GM23248 (cell line): ENCODE measurements at regions of chr5 and their contacts with region 1.

Region 1: GRCh38 chr5:44774279-44774880 is 34.4 kb upstream of the MRPS30 start:
- DNase-seq: peak; percentile 76
- H3K4me3 ChIP-seq: no peak overlapping the region
- H3K27ac ChIP-seq: no peak overlapping the region
- H3K4me1 ChIP-seq: peaks cover 6% of the 10 kb centered on the region
- H3K27me3 ChIP-seq: peaks cover 15% of the 10 kb centered on the region

Region 2: GRCh38 chr5:43729846-43730478 is 1044.4 kb before region 1 on chr5:
- in situ Hi-C with region 1: loop called (anchors 25 kb)
- DNase-seq: peak; percentile 48
- H3K4me3 ChIP-seq: no peak overlapping the region
- H3K27ac ChIP-seq: no peak overlapping the region
- H3K4me1 ChIP-seq: peaks cover 3% of the 10 kb centered on the region
- H3K27me3 ChIP-seq: no peaks in the 10 kb centered on the region

Region 3: DNA sequence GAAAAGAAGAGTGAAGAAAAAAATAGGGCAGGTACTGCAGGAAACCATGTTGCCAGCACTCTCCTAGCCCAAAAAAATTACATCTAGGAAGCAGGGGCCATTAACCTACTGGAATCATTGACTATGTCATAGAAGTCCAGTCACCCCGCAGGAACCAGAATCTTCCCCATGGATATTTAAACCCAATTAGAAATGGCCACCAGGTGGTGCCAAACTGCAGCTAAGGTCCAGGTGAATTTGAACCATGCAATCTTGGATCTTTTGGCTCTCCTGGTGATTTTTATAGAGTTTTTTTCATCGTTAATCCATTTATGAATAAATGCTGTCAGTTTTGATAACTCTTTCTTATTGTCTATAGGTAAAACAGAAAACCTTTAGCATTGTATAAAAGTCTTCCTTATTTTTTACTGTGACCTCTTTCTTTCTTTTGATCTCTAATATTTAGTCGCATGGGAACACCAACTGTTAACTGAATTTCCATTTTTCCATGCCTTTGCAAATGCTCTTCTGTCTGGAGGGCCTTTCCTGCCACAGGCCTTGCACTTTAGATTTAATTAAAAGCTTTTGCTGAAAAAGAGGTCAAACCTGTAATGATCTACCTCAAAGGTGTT is 237.6 kb before region 1 on chr5:
- in situ Hi-C with region 1: loop called (anchors 10 kb)
- DNase-seq: peak; percentile 63
- H3K4me3 ChIP-seq: no peak overlapping the region
- H3K27ac ChIP-seq: no peak overlapping the region
- H3K4me1 ChIP-seq: no peaks in the 10 kb centered on the region
- H3K27me3 ChIP-seq: peaks cover 47% of the 10 kb centered on the region

Region 4: DNA sequence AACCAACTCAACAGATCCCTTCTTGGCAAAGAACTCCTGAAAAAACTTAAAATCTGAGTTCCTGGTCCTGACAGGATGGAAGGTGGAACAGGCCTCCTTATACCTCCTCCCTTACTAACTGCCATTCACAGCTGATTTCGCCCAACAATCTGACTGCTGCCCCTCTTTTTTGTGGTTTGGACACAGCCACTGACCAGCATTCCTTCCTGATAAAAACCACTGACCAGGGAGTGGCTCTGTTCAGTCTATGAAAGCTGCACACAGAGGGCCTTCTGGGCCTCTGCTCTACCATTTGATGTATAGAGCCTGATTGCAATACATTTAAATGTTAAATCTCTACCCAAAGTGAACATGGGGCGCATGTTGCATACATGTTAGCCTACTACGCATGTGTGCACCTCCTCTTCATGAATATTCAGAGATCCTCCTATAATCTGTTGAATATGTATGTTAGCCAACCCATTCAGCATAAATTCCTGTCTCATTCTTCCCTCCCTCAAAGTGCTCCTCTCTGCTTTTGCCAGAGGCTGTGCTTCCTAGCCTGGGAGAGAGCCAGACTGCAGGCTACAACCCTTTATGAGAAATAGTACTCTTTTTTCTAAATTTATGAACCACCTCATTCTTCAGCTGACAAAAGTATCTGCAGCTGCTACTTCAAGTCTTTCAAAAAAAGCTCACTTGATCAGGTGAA is 59.4 kb before region 1 on chr5:
- in situ Hi-C with region 1: no loop called
- DNase-seq: no peak
- H3K4me3 ChIP-seq: no peak overlapping the region
- H3K27ac ChIP-seq: no peak overlapping the region
- H3K4me1 ChIP-seq: no peaks in the 10 kb centered on the region
- H3K27me3 ChIP-seq: no peaks in the 10 kb centered on the region